Psoas muscle (tissue), 8 donors: ENCODE measurements at regions of chr1 and their contacts with region 1.

Region 1: DNA sequence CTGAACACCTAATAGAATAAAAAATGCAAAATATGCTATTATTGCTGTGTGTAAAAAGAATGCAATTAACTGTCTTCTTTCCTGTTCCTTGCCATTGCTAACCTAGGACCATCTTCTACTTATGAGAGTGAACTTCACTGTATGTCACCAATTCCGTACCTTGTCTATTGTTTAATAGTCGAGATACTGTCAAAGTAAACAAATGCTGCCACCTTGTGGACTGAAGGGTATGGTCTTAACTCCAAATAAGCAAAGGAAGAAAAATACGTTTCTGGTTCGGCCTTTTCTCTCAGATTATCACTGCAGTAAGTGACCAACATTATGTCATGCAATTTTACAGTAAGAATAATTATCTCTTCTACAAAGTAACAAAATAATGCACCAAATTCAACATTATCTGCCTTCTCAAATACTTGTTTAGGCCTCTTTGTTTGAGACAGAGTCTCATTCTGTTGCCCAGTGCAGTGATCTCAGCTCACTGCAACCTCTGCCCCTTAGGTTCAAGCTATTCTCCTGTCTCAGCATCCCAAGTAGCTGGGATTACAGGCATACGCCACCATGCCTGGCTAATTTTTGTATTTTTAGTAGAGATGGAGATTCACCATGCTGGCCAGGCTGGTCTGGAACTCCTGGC is 133.4 kb downstream of the COP1 start:
- DNase-seq: no peak
- ATAC-seq: peak; percentile 32 to 67 (median 51)
- H3K4me3 ChIP-seq: no peak overlapping the region
- H3K27ac ChIP-seq: no peak overlapping the region
- H3K4me1 ChIP-seq: no peaks in the 10 kb centered on the region
- H3K27me3 ChIP-seq: no peaks in the 10 kb centered on the region
- CTCF ChIP-seq: peak; percentile 67

Region 2: DNA sequence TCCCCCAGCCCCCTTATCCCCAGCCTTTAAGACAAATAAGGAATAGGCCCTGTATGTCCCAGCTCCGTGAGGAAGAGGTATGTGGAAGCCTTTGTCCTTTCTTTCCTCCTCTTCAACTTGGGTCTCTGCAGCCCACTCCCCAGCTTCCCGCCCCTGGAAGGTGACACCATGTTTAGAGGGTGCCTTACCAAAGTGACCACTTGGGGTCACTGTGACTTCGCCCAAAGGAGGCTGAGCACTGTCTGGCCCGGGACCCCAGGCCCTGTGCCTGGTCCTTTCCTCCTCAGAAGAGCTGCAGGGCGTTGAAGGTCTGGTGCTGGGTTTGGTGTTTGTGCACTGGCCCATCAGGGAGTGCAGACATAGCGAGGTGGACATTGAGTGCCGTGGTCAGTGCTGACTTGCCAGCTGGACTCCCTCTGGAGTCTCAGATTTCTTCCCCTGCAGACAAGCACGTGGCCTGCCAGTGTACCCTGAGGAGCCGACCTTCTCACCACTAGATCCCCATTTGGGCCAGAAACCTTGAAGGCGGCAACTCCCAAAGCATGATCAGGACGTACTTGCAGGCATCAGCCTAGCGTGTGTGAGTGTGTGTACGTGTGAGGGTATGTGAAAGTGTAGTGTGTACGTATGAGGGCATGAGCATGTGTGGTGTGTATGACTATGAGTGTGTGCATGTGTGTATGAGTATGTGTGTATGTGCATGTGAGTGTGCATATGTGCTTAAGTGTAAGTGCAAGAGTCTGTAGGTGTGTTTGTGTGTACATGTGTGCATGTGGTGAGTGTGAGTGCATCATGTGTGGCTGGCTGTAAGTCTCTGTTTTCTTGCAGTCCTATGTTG is 699.6 kb before region 1 on chr1:
- intact Hi-C with region 1: loop called in 1 of 2 experiments (anchors 10 kb)
- DNase-seq: no peak
- ATAC-seq: peak in 2 of 4 donors; percentile 32 to 40
- H3K4me3 ChIP-seq: no peak overlapping the region
- H3K27ac ChIP-seq: no peak overlapping the region
- H3K4me1 ChIP-seq: no peaks in the 10 kb centered on the region
- H3K27me3 ChIP-seq: peaks cover 0 to 4% (median 0%) of the 10 kb centered on the region in 3 donors
- CTCF ChIP-seq: peak; percentile 44

Region 3: DNA sequence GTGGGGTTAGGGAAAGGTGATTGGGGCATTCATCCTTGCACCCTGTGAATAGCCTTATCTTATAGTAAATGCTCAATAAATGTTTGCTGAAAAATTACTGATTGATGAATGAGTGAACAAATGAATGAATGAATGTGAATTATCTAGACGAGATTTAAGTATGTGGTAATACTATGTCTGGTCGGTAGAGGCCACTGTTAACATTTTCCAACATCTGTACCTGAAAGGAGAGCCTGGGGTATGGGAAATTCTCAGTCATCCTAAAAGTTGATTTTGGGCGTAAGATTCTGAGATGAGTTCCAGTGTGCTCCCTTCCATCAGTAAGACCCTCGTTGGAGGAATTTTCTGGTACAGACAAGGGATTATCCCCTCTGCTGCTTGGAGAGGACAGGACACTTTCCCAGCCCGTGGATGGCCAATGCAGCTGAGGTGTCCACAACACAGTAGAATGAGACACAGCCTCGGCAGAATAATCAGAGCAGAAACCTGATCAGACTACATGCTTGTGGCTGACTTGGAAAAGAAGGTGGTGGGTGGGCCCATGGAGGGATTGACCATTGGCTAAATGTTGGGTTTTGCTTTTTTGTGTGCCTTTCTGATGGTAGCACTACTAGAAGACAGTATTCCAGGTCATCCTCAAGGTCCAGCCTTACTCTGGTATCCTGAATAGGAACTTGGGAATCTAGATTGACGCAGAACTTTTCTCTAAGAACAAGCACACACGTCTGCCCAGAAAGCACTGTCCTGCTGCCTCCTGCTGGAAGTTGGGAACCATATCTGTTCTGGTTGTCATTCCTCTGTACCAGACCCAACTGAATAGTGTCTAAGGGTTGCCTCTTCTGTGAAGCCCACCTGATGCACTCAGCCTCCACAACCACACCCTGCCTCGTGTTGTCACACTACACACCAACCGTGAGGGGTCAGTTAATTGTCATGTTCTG is 592.2 kb before region 1 on chr1:
- intact Hi-C with region 1: loop called (anchors 2 to 10 kb)
- DNase-seq: no peak
- ATAC-seq: no peak
- H3K4me3 ChIP-seq: no peak overlapping the region
- H3K27ac ChIP-seq: no peak overlapping the region
- H3K4me1 ChIP-seq: no peaks in the 10 kb centered on the region
- H3K27me3 ChIP-seq: no peaks in the 10 kb centered on the region
- CTCF ChIP-seq: peak; percentile 52

Region 4: DNA sequence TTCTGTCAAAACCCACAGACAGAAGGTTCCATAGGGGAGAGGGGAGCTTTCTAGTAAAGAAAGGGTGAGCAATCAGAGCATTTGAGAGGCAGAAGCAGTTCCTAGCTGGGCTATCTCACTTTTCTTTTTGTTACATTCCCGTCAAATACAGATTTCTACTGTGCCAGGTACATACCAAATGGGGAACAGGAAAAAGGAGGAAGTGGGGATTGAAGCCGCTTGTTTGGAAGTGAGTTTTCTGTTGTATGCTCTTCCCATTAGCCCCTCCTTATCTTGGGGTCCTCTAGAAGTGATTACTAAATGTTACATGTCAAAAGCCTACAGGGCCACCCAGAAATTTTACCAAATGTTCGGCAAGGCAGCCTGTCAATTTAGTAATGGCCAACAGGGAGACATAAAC is 505.4 kb after region 1 on chr1:
- intact Hi-C with region 1: no loop called
- DNase-seq: no peak
- ATAC-seq: no peak
- H3K4me3 ChIP-seq: no peak overlapping the region
- H3K27ac ChIP-seq: no peak overlapping the region
- H3K4me1 ChIP-seq: no peaks in the 10 kb centered on the region
- H3K27me3 ChIP-seq: no peaks in the 10 kb centered on the region
- CTCF ChIP-seq: no peak